HepG2 (cell line): ENCODE measurements at regions of chr9 and their contacts with region 1.

Region 1: DNA sequence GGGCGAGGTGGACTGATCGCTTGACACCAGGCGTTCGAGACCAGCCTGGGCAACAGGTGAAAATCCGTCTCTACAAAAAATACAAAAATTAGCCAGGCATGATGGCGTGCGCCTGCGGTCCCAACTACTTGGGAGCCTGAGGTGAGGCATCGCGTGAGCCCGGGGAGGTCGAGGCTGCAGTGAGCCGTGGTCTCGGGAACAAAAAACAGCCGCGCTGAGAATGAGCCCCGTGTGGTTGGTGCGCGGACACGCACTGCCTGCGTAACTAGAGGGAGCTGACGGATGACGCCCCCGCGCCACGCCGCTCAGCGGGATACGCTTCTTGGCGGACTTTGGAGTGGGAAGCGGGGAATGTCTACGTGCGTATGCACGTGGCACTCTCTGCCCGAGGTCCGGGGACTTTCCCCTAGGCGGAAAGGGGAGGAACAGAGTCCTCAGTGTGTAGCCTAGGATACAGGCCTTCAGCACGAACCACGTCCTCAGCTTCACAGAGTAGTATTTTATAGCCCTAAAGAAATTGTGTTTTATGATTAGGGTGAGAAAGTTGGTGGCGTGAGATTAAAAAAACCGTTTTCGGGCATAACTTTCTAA is at the start of gene RMRP:
- DNase-seq: peak; percentile 99
- ATAC-seq: peak; percentile 90
- H3K4me3 ChIP-seq: peak within 1 kb of the TSS; percentile 66 to 89 (median 85)
- H3K27ac ChIP-seq: peak within 1 kb of the TSS; percentile 100
- H3K4me1 ChIP-seq: peaks cover 71% of the 10 kb centered on the region
- H3K27me3 ChIP-seq: no peaks in the 10 kb centered on the region; a peak in 2 of 5 replicates
- CTCF ChIP-seq: peak; percentile 65
- EP300 ChIP-seq: peak in 1 of 2 experiments; percentile 57; a peak in 3 of 4 replicates
- POLR2A ChIP-seq: peak in 1 of 2 experiments; percentile 74; a peak in 1 of 4 replicates
- RAD21 ChIP-seq: peak; percentile 14; the same call in 1 of the 2 replicates
- total RNA-seq, gene RMRP: 1,047 and 4,025 TPM in 2 replicates

Region 2: DNA sequence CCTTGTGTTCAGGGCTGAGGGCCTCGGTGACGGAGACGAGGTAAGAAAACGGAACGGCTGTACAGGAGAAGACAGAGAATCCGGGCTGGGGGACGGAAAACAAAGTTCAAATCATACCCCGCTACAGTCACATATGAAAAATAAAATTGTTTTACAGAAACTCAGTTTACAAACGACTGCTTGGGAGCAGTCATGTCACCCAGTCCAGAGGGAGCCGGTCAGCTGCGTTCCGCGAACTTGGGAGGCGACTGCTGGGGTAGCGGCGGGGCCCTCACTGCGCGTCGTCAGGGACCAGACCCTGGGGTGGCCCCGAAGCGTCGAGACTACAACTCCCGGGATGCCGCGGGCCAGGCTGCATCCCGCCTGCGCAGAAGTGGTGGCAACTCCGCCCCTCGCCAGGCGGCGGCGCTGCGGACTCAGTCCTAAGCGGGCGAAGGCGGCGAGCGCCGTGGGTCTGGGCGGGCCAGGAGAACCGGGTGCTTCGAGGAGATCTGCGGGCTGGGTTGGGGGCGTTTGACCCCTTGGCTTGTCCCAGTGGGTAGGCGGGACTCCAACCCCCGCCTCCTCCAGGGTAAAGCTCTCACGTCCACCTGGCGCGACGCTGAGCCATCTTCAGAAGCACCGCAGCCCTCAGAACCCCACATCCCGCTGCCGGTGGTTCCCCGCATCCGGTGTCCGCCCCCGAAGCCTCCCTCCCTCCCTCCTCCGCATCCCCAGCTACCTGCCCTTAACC is 10.9 kb before region 1 on chr9:
- CTCF ChIA-PET with region 1: interaction called, 8 read pairs
- POLR2A ChIA-PET with region 1: interaction called, 41 read pairs
- in situ Hi-C with region 1: no loop called
- intact Hi-C with region 1: loop called (anchors 1 kb)
- DNase-seq: peak; percentile 78
- ATAC-seq: peak; percentile 95
- H3K4me3 ChIP-seq: peak overlapping the region; percentile 70 to 83 (median 72)
- H3K27ac ChIP-seq: peak overlapping the region; percentile 67
- H3K4me1 ChIP-seq: peaks cover 55% of the 10 kb centered on the region
- H3K27me3 ChIP-seq: peaks cover 2 to 22% of the 10 kb centered on the region in 2 experiments; a peak in 3 of 5 replicates
- CTCF ChIP-seq: peak; percentile 98
- EP300 ChIP-seq: no peak
- POLR2A ChIP-seq: peak; percentile 64 to 81
- RAD21 ChIP-seq: peak; percentile 93

Region 3: GRCh38 chr9:35690431-35691333 is 33.0 kb after region 1 on chr9:
- CTCF ChIA-PET with region 1: interaction called, 9 read pairs
- POLR2A ChIA-PET with region 1: interaction called, 68 read pairs
- in situ Hi-C with region 1: loop called (anchors 5 kb)
- intact Hi-C with region 1: no loop called
- DNase-seq: no peak
- ATAC-seq: peak; percentile 53
- H3K4me3 ChIP-seq: peak overlapping the region; percentile 75 to 84 (median 81)
- H3K27ac ChIP-seq: peak overlapping the region; percentile 26
- H3K4me1 ChIP-seq: peaks cover 65% of the 10 kb centered on the region
- H3K27me3 ChIP-seq: no peaks in the 10 kb centered on the region
- CTCF ChIP-seq: no peak
- EP300 ChIP-seq: no peak
- POLR2A ChIP-seq: peak in 1 of 2 experiments; percentile 42; a peak in 1 of 4 replicates
- RAD21 ChIP-seq: no peak

Region 4: DNA sequence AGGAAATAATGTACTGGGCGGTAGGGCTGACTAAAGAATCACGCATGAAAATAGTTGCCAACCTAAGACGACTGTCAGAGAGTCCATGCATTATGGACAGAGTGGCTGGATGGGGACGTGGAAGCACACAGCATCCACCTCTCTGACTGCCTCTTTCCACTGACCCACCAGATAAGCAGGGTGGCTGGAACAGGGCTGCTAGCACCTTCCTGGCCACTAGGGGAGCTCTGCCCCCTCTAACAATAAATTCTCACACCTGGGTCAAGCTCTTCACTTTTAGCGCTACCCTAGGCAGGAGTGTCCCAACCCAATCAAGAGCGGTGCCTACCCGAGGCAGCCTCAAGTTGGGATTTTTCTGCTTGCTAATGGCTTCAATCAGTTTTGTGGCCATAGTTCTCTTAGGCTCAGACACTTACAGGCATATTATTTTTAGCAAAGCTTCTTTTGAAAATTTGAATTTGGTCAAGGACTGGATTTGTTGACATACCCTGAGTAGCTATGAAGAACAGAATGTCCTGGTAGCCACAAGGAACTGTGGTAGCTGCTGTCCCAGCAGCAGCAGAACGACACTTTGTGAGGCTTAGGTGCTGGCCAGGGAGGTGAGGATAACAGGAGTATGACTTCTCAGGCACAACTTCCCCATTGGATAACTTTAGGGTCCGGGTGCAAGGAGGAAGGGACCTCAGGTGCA is 39.0 kb after region 1 on chr9:
- CTCF ChIA-PET with region 1: interaction called, 9 read pairs
- POLR2A ChIA-PET with region 1: interaction called, 68 read pairs
- in situ Hi-C with region 1: loop called (anchors 5 kb)
- intact Hi-C with region 1: loop called (anchors 2 kb)
- DNase-seq: peak; percentile 59
- ATAC-seq: peak; percentile 92
- H3K4me3 ChIP-seq: no peak overlapping the region
- H3K27ac ChIP-seq: no peak overlapping the region
- H3K4me1 ChIP-seq: peaks cover 19% of the 10 kb centered on the region
- H3K27me3 ChIP-seq: no peaks in the 10 kb centered on the region
- CTCF ChIP-seq: peak; percentile 82
- EP300 ChIP-seq: no peak
- POLR2A ChIP-seq: peak in 1 of 2 experiments; percentile 24; a peak in 1 of 4 replicates
- RAD21 ChIP-seq: peak; percentile 71

Region 5: GRCh38 chr9:35748858-35749514 is 91.3 kb after region 1 on chr9 and contains the starts of genes GBA2 and RGP1:
- CTCF ChIA-PET with region 1: no interaction called
- POLR2A ChIA-PET with region 1: interaction called, 9 read pairs
- in situ Hi-C with region 1: no loop called
- intact Hi-C with region 1: loop called (anchors 1 kb)
- DNase-seq: peak; percentile 77
- ATAC-seq: peak; percentile 90
- H3K4me3 ChIP-seq: peak within 1 kb of the TSS; percentile 95 to 99 (median 98)
- H3K27ac ChIP-seq: peak within 1 kb of the TSS; percentile 89
- H3K4me1 ChIP-seq: peaks cover 42% of the 10 kb centered on the region
- H3K27me3 ChIP-seq: no peaks in the 10 kb centered on the region; a peak in 2 of 5 replicates
- CTCF ChIP-seq: no peak; the same call in 1 of the 2 replicates
- EP300 ChIP-seq: 0 out of 4 replicates have a peak, but pooled peaks of 1 of the 2 experiments have one; percentile 15
- POLR2A ChIP-seq: peak; percentile 59 to 68
- RAD21 ChIP-seq: no peak; the same call in 1 of the 2 replicates
- total RNA-seq, gene GBA2: 24.4 and 37.5 TPM in 2 replicates
- total RNA-seq, gene RGP1: 12.6 and 12.7 TPM in 2 replicates

Region 6: DNA sequence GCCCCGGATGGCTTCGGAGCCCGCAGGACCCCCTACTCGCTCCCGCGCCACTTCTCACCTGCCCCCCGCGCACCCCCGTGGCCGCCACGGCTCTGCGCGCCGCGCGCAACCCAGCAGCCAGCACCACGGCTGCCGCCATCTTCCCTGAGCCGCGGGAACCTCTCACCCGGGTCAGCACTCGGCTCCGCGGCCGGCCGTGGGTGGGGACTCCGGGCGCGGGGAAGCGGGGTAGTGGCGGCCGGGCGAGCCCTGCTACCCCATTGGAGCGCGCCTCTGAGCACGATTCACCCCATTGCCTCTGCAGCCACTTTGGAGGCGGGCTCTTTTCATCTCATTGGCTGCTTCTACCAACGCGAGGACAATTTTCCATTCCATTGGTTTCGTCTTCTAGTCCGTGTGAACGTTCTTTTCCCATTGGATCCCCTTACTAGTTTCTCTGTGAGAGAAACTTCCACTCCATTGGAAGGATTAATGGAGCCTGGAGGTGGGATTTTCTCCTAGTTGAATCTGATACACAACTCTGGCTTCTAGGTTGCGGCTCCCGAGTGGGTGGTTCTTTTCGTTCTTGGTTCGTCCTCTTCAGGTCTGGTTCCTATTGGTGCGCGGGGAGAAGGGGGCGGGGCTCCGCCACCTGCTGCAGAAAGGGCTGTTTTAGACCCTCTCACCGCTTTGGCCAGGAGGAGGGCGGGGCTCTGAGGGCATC is 157.4 kb after region 1 on chr9 and contains the start of gene HINT2:
- CTCF ChIA-PET with region 1: no interaction called
- POLR2A ChIA-PET with region 1: interaction called, 12 read pairs
- in situ Hi-C with region 1: no loop called
- intact Hi-C with region 1: no loop called
- DNase-seq: peak; percentile 99
- ATAC-seq: peak; percentile 90
- H3K4me3 ChIP-seq: peak within 1 kb of the TSS; percentile 68 to 86 (median 86)
- H3K27ac ChIP-seq: peak within 1 kb of the TSS; percentile 99
- H3K4me1 ChIP-seq: peaks cover 44% of the 10 kb centered on the region
- H3K27me3 ChIP-seq: no peaks in the 10 kb centered on the region
- CTCF ChIP-seq: no peak
- EP300 ChIP-seq: no peak
- POLR2A ChIP-seq: peak; percentile 79 to 82
- RAD21 ChIP-seq: no peak
- total RNA-seq, gene HINT2: 51.4 and 56.2 TPM in 2 replicates